ENCODE measurements at regions of chr2 and their contacts with region 1.

Region 1: GRCh38 chr2:112433932-112434730 is 686 bp upstream of the RGPD8 start:
- DNase-seq: peak in 1 of 2 donors; percentile 18
- ATAC-seq: no peak
- H3K4me3 ChIP-seq: no peak overlapping the region
- H3K27ac ChIP-seq: no peak overlapping the region
- H3K4me1 ChIP-seq: peaks cover 7% of the 10 kb centered on the region
- H3K27me3 ChIP-seq: peaks cover 0 to 2% (median 0%) of the 10 kb centered on the region in 3 donors
- CTCF ChIP-seq: no peak

Region 2: GRCh38 chr2:112121682-112122254 is 312.4 kb before region 1 on chr2:
- intact Hi-C with region 1: loop called in 1 of 2 experiments (anchors 10 kb)
- DNase-seq: no peak
- ATAC-seq: no peak
- H3K4me3 ChIP-seq: no peak overlapping the region
- H3K27ac ChIP-seq: no peak overlapping the region
- H3K4me1 ChIP-seq: no peaks in the 10 kb centered on the region
- H3K27me3 ChIP-seq: no peaks in the 10 kb centered on the region
- CTCF ChIP-seq: peak; percentile 59

Region 3: GRCh38 chr2:112301171-112301584 is 133.0 kb before region 1 on chr2:
- intact Hi-C with region 1: no loop called
- DNase-seq: no peak
- ATAC-seq: no peak
- H3K4me3 ChIP-seq: no peak overlapping the region
- H3K27ac ChIP-seq: no peak overlapping the region
- H3K4me1 ChIP-seq: no peaks in the 10 kb centered on the region
- H3K27me3 ChIP-seq: no peaks in the 10 kb centered on the region
- CTCF ChIP-seq: no peak

Region 4: DNA sequence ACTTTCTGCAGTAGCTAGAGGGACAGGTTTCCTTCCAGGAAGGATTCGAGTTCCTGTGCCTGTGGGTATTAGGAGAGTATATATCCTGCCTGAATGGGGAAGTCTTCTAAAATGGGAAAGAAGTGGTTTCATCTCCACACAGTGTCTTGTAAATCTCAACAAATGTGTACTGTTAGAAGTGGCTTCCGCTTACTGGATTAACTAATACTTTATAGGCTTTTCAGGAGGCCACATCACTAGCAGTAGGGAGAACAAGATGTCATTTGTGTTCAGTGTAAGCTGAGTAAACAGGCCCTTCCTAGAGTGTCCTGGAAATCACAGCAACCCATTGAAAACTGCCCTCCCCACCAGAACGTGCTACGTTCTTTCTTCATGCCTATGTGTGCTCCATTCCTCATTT is 95.6 kb after region 1 on chr2:
- intact Hi-C with region 1: no loop called
- DNase-seq: no peak
- ATAC-seq: no peak
- H3K4me3 ChIP-seq: no peak overlapping the region
- H3K27ac ChIP-seq: no peak overlapping the region
- H3K4me1 ChIP-seq: no peaks in the 10 kb centered on the region
- H3K27me3 ChIP-seq: no peaks in the 10 kb centered on the region
- CTCF ChIP-seq: no peak